Sigmoid colon (tissue), 7 donors: ENCODE measurements at regions of chr6 and their contacts with region 1.

Region 1: DNA sequence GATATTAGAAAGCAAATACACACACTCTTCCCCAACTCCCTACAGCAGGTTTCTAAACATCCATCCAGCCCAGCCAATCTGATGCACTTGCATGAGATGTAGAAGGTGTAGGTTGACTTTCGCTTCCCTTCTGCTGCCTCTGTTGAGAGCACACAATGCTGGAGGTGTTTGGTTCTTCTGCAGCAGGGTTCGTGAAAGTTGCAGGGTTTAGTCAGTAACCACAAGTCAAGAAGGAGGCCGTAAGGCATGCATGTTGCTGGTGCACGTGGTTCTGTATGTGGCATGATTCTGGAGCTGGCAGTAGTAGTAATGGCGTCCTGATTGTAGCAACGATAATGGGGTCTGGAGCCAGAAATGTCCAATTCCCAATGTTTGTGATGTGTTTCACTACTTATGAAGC is 53.0 kb downstream of the DEK start:
- DNase-seq: no peak
- H3K4me3 ChIP-seq: no peak overlapping the region
- H3K27ac ChIP-seq: no peak overlapping the region
- H3K4me1 ChIP-seq: peaks cover 0 to 17% (median 13%) of the 10 kb centered on the region in 4 donors
- H3K27me3 ChIP-seq: no peaks in the 10 kb centered on the region
- CTCF ChIP-seq: no peak
- EP300 ChIP-seq: no peak
- POLR2A ChIP-seq: no peak

Region 2: DNA sequence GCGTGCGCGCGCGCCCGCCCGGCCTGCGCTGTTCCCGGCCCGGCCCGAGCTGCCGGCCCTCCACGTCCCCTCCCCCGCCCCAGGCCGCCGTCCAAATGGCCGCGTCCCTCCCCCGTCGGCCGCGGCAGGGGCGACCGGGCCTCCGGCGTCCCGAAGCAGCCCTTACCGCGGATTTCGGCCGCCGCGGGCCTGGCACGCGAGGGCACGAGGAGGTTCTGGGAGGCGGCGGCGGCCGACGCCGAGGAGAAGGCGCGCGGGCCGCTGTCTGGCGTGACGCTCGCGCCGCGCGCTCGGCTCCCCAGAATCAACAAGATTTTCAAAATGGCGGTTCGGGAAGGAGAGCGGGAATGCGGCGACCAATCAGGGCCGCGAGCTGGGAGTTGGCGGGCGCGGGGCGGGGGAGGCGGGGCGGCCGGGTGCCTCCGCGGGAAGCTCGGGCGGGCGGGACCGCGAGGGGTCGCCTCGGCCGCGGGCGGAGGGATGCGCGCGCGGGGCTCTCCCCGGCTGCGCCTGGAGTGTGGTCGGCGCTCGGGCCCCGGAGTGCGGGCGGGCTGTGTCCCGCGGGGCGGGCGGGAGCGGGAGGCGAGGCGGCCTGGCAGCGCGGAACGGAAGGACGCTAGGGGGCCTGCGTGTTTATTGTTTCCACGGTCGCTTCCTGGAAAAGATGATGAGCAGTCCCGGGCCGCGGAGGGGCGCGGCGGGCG is 53.0 kb after region 1 on chr6 and contains the start of gene DEK:
- intact Hi-C with region 1: loop called (anchors 5 kb)
- DNase-seq: peak; percentile 94
- H3K4me3 ChIP-seq: peak within 1 kb of the TSS; percentile 69 to 93 (median 74)
- H3K27ac ChIP-seq: peak within 1 kb of the TSS; percentile 95 to 100 (median 98)
- H3K4me1 ChIP-seq: peaks cover 0 to 41% (median 31%) of the 10 kb centered on the region in 4 donors
- H3K27me3 ChIP-seq: no peaks in the 10 kb centered on the region
- CTCF ChIP-seq: peak; percentile 22 to 53 (median 38)
- EP300 ChIP-seq: no peak
- POLR2A ChIP-seq: no peak
- total RNA-seq, gene DEK: 181 to 236 (median 202) TPM

Region 3: GRCh38 chr6:18343741-18344140 is 132.4 kb after region 1 on chr6:
- intact Hi-C with region 1: no loop called
- DNase-seq: no peak
- H3K4me3 ChIP-seq: no peak overlapping the region
- H3K27ac ChIP-seq: no peak overlapping the region
- H3K4me1 ChIP-seq: no peaks in the 10 kb centered on the region
- H3K27me3 ChIP-seq: no peaks in the 10 kb centered on the region
- CTCF ChIP-seq: no peak
- EP300 ChIP-seq: no peak
- POLR2A ChIP-seq: no peak